ENCODE measurements at regions of chr2 and their contacts with region 1.

Region 1: GRCh38 chr2:19256121-19256601 is 102.3 kb downstream of the OSR1 start:
- DNase-seq: peak; percentile 99
- ATAC-seq: peak; percentile 97
- H3K4me3 ChIP-seq: no peak overlapping the region
- H3K27ac ChIP-seq: peak overlapping the region; percentile 88
- H3K4me1 ChIP-seq: peaks cover 25% of the 10 kb centered on the region
- H3K27me3 ChIP-seq: no peaks in the 10 kb centered on the region
- CTCF ChIP-seq: no peak

Region 2: GRCh38 chr2:18552351-18553077 is 703.6 kb before region 1 on chr2:
- CTCF ChIA-PET with region 1: no interaction called
- POLR2A ChIA-PET with region 1: no interaction called
- intact Hi-C with region 1: no loop called
- DNase-seq: peak; percentile 43
- ATAC-seq: peak; percentile 29
- H3K4me3 ChIP-seq: no peak overlapping the region
- H3K27ac ChIP-seq: peak overlapping the region; percentile 94
- H3K4me1 ChIP-seq: peaks cover 41% of the 10 kb centered on the region
- H3K27me3 ChIP-seq: no peaks in the 10 kb centered on the region
- CTCF ChIP-seq: no peak

Region 3: GRCh38 chr2:19146867-19147266 is 109.3 kb before region 1 on chr2:
- CTCF ChIA-PET with region 1: no interaction called
- POLR2A ChIA-PET with region 1: no interaction called
- intact Hi-C with region 1: loop called (anchors 5 kb)
- DNase-seq: no peak
- ATAC-seq: peak; percentile 50; the same call in 1 of the 2 replicates
- H3K4me3 ChIP-seq: no peak overlapping the region
- H3K27ac ChIP-seq: no peak overlapping the region
- H3K4me1 ChIP-seq: peaks cover 25% of the 10 kb centered on the region
- H3K27me3 ChIP-seq: no peaks in the 10 kb centered on the region
- CTCF ChIP-seq: no peak

Region 4: GRCh38 chr2:19207452-19207851 is 48.7 kb before region 1 on chr2:
- CTCF ChIA-PET with region 1: no interaction called
- POLR2A ChIA-PET with region 1: no interaction called
- intact Hi-C with region 1: no loop called
- DNase-seq: no peak
- ATAC-seq: no peak
- H3K4me3 ChIP-seq: no peak overlapping the region
- H3K27ac ChIP-seq: no peak overlapping the region
- H3K4me1 ChIP-seq: no peaks in the 10 kb centered on the region
- H3K27me3 ChIP-seq: no peaks in the 10 kb centered on the region
- CTCF ChIP-seq: no peak

Region 5: DNA sequence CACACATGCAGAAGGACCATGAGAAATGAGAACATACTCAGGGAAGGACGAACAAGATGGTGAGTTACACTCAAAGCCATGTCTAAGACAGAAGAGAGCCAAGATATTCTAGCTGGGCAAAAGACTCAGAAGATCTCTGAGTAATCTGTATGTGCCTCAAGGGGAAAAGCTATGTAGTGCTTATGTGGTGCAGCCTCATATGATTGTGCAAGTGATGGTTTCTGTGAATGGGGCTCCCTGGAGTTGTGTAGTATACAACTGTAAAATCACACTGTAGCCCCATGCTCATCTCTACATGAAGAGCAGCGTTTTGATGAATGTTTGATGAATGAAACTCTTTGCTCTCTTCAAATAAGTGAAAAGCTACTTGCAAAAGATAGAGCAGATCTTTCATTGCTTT is 44.8 kb after region 1 on chr2:
- CTCF ChIA-PET with region 1: no interaction called
- POLR2A ChIA-PET with region 1: no interaction called
- intact Hi-C with region 1: loop called (anchors 1 kb)
- DNase-seq: no peak
- ATAC-seq: no peak
- H3K4me3 ChIP-seq: no peak overlapping the region
- H3K27ac ChIP-seq: no peak overlapping the region
- H3K4me1 ChIP-seq: peaks cover 10% of the 10 kb centered on the region
- H3K27me3 ChIP-seq: no peaks in the 10 kb centered on the region
- CTCF ChIP-seq: no peak